Activated CD8-positive, alpha-beta T cell treated with anti-CD3 and anti-CD28 coated beads, Interleukin-2, amount 10 ng/mL, durations not matched to agents 7 days and 5 days (primary cell): ENCODE measurements at regions of chr7 and their contacts with region 1.

Region 1: GRCh38 chr7:6323967-6324701 is 51.7 kb upstream of the CYTH3 start:
- DNase-seq: no peak
- ATAC-seq: no peak
- H3K4me3 Mint-ChIP-seq: no peak overlapping the region
- H3K27ac Mint-ChIP-seq: no peak overlapping the region
- H3K4me1 Mint-ChIP-seq: peaks cover 3% of the 10 kb centered on the region
- H3K27me3 Mint-ChIP-seq: no peaks in the 10 kb centered on the region

Region 2: GRCh38 chr7:5854738-5855137 is 469.4 kb before region 1 on chr7:
- CTCF ChIA-PET with region 1: interaction called, 11 read pairs
- POLR2A ChIA-PET with region 1: no interaction called
- DNase-seq: no peak
- ATAC-seq: no peak
- H3K4me3 Mint-ChIP-seq: no peak overlapping the region
- H3K27ac Mint-ChIP-seq: no peak overlapping the region
- H3K4me1 Mint-ChIP-seq: peaks cover 21% of the 10 kb centered on the region
- H3K27me3 Mint-ChIP-seq: no peaks in the 10 kb centered on the region

Region 3: DNA sequence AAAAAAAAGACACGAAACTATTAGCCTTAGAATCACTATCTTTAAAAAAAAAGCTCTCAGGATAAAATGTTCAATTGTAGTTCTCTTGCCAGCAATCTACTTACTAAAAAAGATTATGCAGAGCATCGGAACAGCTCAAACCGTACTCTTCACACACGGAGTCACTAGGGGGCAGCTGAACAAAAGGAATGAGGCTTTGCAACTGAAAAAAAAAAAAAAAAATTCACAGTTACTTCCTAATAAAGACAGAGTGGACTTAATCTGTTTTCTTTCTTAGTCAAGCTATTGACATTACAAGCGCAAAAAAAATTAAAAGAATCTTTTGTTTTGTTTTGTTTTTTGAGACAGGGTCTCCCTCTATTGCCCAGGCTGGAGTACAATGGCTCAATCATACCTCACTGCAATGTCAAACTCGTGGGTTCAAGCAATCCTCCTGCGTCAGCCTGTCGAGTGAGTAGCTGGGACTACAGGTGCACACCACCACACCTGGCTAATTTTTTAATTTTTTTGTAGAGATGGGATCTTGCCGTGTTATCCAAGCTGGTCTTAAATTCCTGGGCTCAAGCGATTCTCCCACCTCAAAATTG is 326.8 kb before region 1 on chr7:
- CTCF ChIA-PET with region 1: interaction called, 15 read pairs
- POLR2A ChIA-PET with region 1: no interaction called
- DNase-seq: peak; percentile 62
- ATAC-seq: peak; percentile 65
- H3K4me3 Mint-ChIP-seq: no peak overlapping the region
- H3K27ac Mint-ChIP-seq: no peak overlapping the region
- H3K4me1 Mint-ChIP-seq: no peaks in the 10 kb centered on the region
- H3K27me3 Mint-ChIP-seq: no peaks in the 10 kb centered on the region

Region 4: GRCh38 chr7:6419310-6419773 is 95.2 kb after region 1 on chr7:
- CTCF ChIA-PET with region 1: no interaction called
- POLR2A ChIA-PET with region 1: no interaction called
- DNase-seq: no peak
- ATAC-seq: no peak
- H3K4me3 Mint-ChIP-seq: no peak overlapping the region
- H3K27ac Mint-ChIP-seq: no peak overlapping the region
- H3K4me1 Mint-ChIP-seq: peaks cover 8% of the 10 kb centered on the region
- H3K27me3 Mint-ChIP-seq: no peaks in the 10 kb centered on the region